ENCODE measurements at regions of chr6 and their contacts with region 1.

Region 1: GRCh38 chr6:166775180-166776081 is 148.4 kb upstream of the RPS6KA2 start:
- DNase-seq: peak in 1 of 2 experiments; percentile 67
- H3K4me3 ChIP-seq: no peak overlapping the region
- H3K27ac ChIP-seq: no peak overlapping the region
- H3K4me1 ChIP-seq: peaks cover 2 to 12% (median 8%) of the 10 kb centered on the region in 4 experiments; a peak in 5 of 7 replicates
- H3K27me3 ChIP-seq: no peaks in the 10 kb centered on the region
- CTCF ChIP-seq: peak; percentile 74 to 91 (median 79)
- EP300 ChIP-seq: no peak
- POLR2A ChIP-seq: no peak
- RAD21 ChIP-seq: peak; percentile 90 to 91

Region 2: GRCh38 chr6:166650824-166651807 is 124.3 kb before region 1 on chr6:
- CTCF ChIA-PET with region 1: no interaction called
- POLR2A ChIA-PET with region 1: no interaction called
- DNase-seq: no peak
- H3K4me3 ChIP-seq: no peak overlapping the region
- H3K27ac ChIP-seq: no peak overlapping the region
- H3K4me1 ChIP-seq: peaks cover 3 to 24% (median 10%) of the 10 kb centered on the region in 4 experiments
- H3K27me3 ChIP-seq: peaks cover 0 to 10% (median 5%) of the 10 kb centered on the region in 4 experiments; a peak in 4 of 7 replicates
- CTCF ChIP-seq: no peak
- EP300 ChIP-seq: no peak
- POLR2A ChIP-seq: no peak
- RAD21 ChIP-seq: no peak

Region 3: GRCh38 chr6:166747644-166748620 is 27.5 kb before region 1 on chr6:
- CTCF ChIA-PET with region 1: interaction called, 33 read pairs
- POLR2A ChIA-PET with region 1: no interaction called
- DNase-seq: peak in 1 of 2 experiments; percentile 47
- H3K4me3 ChIP-seq: 0 out of 8 replicates have a peak overlapping the region, but pooled peaks of 1 of the 4 experiments have one; percentile 7
- H3K27ac ChIP-seq: no peak overlapping the region
- H3K4me1 ChIP-seq: peaks cover 0 to 28% (median 11%) of the 10 kb centered on the region in 4 experiments; a peak in 6 of 7 replicates
- H3K27me3 ChIP-seq: no peaks in the 10 kb centered on the region
- CTCF ChIP-seq: no peak
- EP300 ChIP-seq: no peak
- POLR2A ChIP-seq: no peak
- RAD21 ChIP-seq: no peak

Region 4: GRCh38 chr6:166836785-166837718 is 61.6 kb after region 1 on chr6:
- CTCF ChIA-PET with region 1: interaction called, 12 read pairs
- POLR2A ChIA-PET with region 1: no interaction called
- DNase-seq: no peak
- H3K4me3 ChIP-seq: no peak overlapping the region
- H3K27ac ChIP-seq: no peak overlapping the region
- H3K4me1 ChIP-seq: no peaks in the 10 kb centered on the region
- H3K27me3 ChIP-seq: no peaks in the 10 kb centered on the region
- CTCF ChIP-seq: peak in 2 of 3 experiments; percentile 1 to 27; a peak in 2 of 4 replicates
- EP300 ChIP-seq: no peak
- POLR2A ChIP-seq: no peak
- RAD21 ChIP-seq: peak; percentile 34 to 46

Region 5: DNA sequence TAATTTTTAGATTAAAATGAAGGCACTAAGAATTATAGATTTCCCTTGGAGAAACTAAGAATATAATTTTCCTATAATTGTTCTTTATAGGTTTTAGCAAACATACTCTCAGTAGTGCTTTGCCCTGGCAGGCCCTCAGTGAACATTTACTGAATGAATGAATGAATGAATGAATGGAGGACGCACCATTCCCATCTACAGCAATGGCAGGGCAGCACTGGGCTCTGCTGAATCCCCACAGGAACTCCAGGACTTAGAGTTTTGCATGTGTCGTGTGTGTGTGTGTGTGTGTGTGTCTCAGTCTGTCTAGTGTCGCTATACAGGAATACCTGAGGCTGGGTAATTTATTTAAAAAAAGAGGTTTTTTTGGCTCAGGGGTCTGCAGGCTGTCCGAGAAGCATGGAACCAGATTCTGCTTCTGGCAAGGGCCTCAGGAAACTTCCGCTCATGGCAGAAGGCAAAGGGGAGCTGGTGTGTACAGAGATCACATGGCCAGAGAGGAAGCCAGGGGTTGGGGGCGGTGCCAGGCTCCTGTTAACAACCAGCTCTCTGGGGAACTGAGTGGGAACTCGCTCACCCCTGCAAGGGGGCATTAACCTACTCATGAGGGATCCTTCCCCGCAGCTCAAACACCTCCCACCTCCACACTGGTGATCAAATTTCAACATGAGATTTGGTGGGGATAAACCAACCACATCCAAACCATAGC is 160.8 kb after region 1 on chr6:
- CTCF ChIA-PET with region 1: interaction called, 10 read pairs
- POLR2A ChIA-PET with region 1: no interaction called
- DNase-seq: no peak
- H3K4me3 ChIP-seq: no peak overlapping the region
- H3K27ac ChIP-seq: no peak overlapping the region
- H3K4me1 ChIP-seq: peaks cover 0 to 3% (median 1%) of the 10 kb centered on the region in 4 experiments; a peak in 2 of 7 replicates
- H3K27me3 ChIP-seq: no peaks in the 10 kb centered on the region
- CTCF ChIP-seq: no peak
- EP300 ChIP-seq: no peak
- POLR2A ChIP-seq: no peak
- RAD21 ChIP-seq: no peak

Region 6: DNA sequence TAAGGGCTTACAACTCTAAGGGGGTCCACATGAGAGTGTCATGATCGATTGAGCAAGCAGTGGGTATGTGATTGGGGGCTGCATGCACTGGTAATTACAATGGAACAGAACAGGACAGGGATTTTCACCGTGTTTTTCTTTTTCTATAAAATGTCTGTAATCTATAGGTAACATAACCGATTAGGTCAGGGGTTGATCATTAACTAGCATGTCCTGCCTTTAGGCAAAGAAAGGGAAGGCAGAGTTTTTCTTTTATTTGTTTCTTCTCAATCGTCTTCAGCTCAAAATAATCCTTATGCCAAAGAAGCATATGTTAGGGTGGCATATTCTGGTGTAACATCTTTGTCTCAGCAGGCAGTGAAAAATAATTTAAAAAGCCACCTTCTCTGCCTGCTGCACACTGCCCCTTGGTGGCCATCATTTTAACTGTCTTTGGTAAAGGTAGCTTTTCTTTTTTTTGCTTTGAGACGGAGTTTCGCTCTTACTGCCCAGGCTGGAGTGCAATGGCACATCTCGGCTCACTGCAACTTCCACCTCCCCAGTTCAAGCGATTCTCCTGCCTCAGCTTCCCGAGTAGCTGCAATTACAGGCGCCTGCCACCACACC is 214.1 kb after region 1 on chr6:
- CTCF ChIA-PET with region 1: interaction called, 46 read pairs
- POLR2A ChIA-PET with region 1: no interaction called
- DNase-seq: no peak
- H3K4me3 ChIP-seq: no peak overlapping the region
- H3K27ac ChIP-seq: no peak overlapping the region
- H3K4me1 ChIP-seq: peaks cover 8 to 13% (median 11%) of the 10 kb centered on the region in 4 experiments; a peak in 6 of 7 replicates
- H3K27me3 ChIP-seq: no peaks in the 10 kb centered on the region
- CTCF ChIP-seq: peak in 2 of 3 experiments; percentile 38 to 54; a peak in 3 of 4 replicates
- EP300 ChIP-seq: no peak
- POLR2A ChIP-seq: no peak
- RAD21 ChIP-seq: peak; percentile 62

Region 7: GRCh38 chr6:167255918-167256553 is 480.6 kb after region 1 on chr6:
- CTCF ChIA-PET with region 1: no interaction called
- POLR2A ChIA-PET with region 1: no interaction called
- DNase-seq: peak in 1 of 2 experiments; percentile 49
- H3K4me3 ChIP-seq: no peak overlapping the region
- H3K27ac ChIP-seq: no peak overlapping the region
- H3K4me1 ChIP-seq: no peaks in the 10 kb centered on the region
- H3K27me3 ChIP-seq: no peaks in the 10 kb centered on the region
- CTCF ChIP-seq: peak in 2 of 3 experiments; percentile 49 to 53; a peak in 3 of 4 replicates
- EP300 ChIP-seq: no peak
- POLR2A ChIP-seq: no peak
- RAD21 ChIP-seq: peak; percentile 53 to 62